SK-N-SH (cell line): ENCODE measurements at regions of chr1 and their contacts with region 1.

Region 1: DNA sequence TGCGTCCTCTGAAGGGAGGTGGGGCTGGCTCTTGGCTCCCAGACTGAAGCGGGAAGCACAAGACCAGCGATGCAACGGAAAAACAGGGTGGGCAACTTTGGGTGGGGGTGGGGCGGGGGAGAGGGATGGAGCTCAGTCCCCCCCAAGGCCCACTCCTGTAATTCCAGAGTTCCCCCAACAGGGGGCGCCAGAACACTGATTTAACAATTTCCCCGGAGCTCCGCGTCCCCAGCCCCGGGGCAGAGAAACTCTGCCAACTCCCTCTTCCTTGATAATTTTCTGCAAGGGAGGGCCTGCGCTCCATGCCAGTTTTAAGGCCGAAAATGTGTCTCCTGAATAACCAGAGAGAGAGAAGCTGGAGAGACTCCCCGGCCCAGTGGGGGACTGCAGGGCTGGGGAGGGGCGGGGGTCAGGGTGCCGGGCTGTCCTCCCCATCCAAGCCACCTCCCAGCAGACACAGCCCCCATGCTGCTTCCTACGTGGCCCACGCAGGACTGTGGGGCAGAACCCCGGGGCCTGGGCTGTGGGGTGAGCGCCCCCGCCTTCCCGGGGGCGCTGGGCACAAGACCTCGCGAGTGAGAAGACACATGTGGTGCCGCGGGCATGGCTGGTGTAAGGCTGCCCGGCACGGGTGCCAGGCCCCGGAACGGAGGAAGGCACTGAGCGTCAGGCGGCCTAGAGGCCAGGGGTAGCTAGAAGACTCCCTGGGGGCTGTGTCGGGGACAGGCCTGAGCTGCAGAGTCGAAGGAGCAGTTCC is 51.4 kb downstream of the KIF21B start:
- DNase-seq: peak; percentile 92
- H3K4me3 ChIP-seq: peak overlapping the region; percentile 9 to 29; a peak in 2 of 4 replicates
- H3K27ac ChIP-seq: no peak overlapping the region
- H3K4me1 ChIP-seq: peaks cover 0 to 3% of the 10 kb centered on the region in 2 experiments; a peak in 1 of 4 replicates
- H3K27me3 ChIP-seq: no peaks in the 10 kb centered on the region
- CTCF ChIP-seq: peak; percentile 79
- EP300 ChIP-seq: no peak
- RAD21 ChIP-seq: peak; percentile 87

Region 2: GRCh38 chr1:200558866-200559459 is 413.2 kb before region 1 on chr1:
- CTCF ChIA-PET with region 1: interaction called, 17 read pairs
- POLR2A ChIA-PET with region 1: no interaction called
- DNase-seq: peak; percentile 47
- H3K4me3 ChIP-seq: no peak overlapping the region
- H3K27ac ChIP-seq: no peak overlapping the region
- H3K4me1 ChIP-seq: no peaks in the 10 kb centered on the region
- H3K27me3 ChIP-seq: no peaks in the 10 kb centered on the region
- CTCF ChIP-seq: peak; percentile 86
- EP300 ChIP-seq: no peak
- RAD21 ChIP-seq: peak; percentile 77

Region 3: DNA sequence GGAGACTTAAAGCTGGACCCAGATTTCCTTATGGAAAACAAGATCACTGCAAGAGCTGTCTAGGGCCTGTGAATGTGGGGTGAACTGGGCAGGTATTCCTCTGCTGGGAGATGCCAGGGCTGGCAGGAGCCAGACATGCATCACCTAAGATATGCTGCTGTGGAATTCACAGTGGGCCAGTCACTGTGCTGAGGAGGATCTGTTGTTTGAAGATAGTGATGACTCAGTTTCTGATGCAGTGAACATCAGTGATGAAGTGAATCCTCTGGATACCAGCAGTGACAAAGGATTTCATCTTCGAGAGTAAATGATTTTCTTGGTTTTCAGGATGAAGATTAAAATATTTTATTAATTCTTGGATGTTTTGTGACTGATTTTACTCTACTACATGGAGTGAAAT is 263.4 kb before region 1 on chr1:
- CTCF ChIA-PET with region 1: no interaction called
- POLR2A ChIA-PET with region 1: no interaction called
- DNase-seq: no peak
- H3K4me3 ChIP-seq: no peak overlapping the region
- H3K27ac ChIP-seq: no peak overlapping the region
- H3K4me1 ChIP-seq: peaks cover 2 to 7% of the 10 kb centered on the region in 2 experiments; a peak in 2 of 4 replicates
- H3K27me3 ChIP-seq: no peaks in the 10 kb centered on the region
- CTCF ChIP-seq: no peak
- EP300 ChIP-seq: no peak
- RAD21 ChIP-seq: no peak

Region 4: GRCh38 chr1:200949626-200950025 is 22.5 kb before region 1 on chr1:
- CTCF ChIA-PET with region 1: interaction called, 44 read pairs
- POLR2A ChIA-PET with region 1: no interaction called
- DNase-seq: no peak
- H3K4me3 ChIP-seq: no peak overlapping the region
- H3K27ac ChIP-seq: no peak overlapping the region
- H3K4me1 ChIP-seq: no peaks in the 10 kb centered on the region
- H3K27me3 ChIP-seq: peaks cover 3% of the 10 kb centered on the region; the same call in 1 of the 2 replicates
- CTCF ChIP-seq: no peak
- EP300 ChIP-seq: no peak
- RAD21 ChIP-seq: no peak

Region 5: DNA sequence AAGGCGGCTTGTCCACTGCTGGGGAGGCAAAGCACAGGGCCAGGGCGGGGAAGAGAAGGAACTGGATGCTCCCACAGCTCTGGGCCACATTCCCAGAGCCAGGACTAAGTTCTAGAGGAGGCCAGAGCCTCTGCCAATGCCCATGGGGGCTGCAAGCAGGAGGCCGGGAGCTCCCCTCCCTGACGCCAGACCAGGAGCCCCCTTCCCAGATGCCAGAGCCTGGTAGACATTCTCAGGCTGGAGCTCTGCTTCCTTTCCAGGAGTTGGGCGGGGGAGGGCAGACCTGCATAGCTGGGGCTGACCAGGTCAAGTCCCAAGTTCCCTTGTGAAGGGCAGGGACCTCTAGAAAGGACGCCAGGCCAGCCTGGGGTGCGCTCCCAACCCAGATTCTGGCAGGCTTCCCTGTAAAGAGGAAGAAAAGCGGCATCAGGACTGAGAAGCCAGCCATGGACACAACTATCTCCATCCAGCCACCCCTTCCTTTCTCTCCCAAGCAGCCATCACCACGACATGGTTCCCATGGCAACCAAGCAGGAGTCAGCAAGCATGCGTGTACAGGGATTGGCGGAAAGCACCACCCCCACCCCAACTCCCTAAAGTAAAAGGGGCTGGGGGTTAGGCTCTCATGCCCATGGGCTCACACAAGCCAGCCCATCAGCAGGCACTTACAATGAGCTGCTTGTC is 38.0 kb after region 1 on chr1:
- CTCF ChIA-PET with region 1: interaction called, 40 read pairs
- POLR2A ChIA-PET with region 1: no interaction called
- DNase-seq: no peak
- H3K4me3 ChIP-seq: no peak overlapping the region
- H3K27ac ChIP-seq: no peak overlapping the region
- H3K4me1 ChIP-seq: peaks cover 0 to 16% of the 10 kb centered on the region in 2 experiments; a peak in 2 of 4 replicates
- H3K27me3 ChIP-seq: no peaks in the 10 kb centered on the region
- CTCF ChIP-seq: no peak
- EP300 ChIP-seq: no peak
- RAD21 ChIP-seq: no peak

Region 6: DNA sequence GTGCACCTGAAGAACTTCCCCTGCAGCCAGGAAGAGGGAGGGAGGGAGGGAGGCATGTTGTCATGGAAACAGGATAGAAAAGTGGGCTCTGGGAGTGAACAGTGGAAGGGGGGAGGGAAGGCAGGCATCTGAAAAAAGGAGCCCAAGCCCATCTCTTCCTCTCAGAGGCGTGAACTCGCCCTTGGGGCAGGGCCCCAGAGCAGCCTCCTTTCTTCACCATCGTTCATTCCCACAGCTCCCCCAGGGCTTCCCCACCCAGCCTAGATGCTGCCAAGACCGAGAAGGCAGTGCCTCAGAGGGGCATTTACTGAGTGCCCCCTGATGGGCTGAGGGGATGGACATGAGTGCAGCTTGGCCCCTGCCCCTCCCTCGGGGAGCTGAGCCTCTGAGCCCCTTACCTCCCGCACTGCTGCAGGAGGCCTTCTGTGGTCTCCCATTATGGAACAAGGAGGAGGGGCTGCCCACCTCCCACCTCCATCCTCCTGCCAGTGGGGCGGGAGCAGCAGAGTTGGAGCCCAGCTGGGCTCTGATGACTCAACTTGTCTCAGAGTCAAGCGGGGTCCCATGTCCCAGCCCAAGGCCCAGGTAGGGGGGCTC is 90.5 kb after region 1 on chr1:
- CTCF ChIA-PET with region 1: interaction called, 13 read pairs
- POLR2A ChIA-PET with region 1: no interaction called
- DNase-seq: no peak
- H3K4me3 ChIP-seq: no peak overlapping the region
- H3K27ac ChIP-seq: no peak overlapping the region
- H3K4me1 ChIP-seq: peaks cover 0 to 7% of the 10 kb centered on the region in 2 experiments; a peak in 1 of 4 replicates
- H3K27me3 ChIP-seq: peaks cover 28% of the 10 kb centered on the region
- CTCF ChIP-seq: no peak
- EP300 ChIP-seq: no peak
- RAD21 ChIP-seq: no peak

Region 7: DNA sequence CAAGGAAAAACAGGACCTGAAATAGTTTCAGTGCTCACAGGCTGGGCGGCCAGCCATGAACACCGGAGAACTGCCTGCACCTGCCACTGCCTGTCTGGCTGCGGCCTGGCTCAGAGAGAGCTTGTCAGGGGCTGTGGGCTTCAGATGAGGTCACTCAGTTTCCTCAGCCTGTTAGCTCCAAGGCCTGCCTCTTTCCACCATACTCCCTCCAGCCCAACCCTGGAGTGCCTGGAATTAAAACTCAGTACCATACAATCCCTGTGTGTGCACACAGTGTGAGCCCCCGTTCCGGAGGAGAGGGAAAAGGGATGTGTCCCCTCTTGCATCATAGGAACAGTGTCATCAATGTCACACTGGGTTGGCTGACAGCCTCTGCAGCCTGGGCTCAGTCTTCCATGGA is 123.9 kb after region 1 on chr1:
- CTCF ChIA-PET with region 1: interaction called, 11 read pairs
- POLR2A ChIA-PET with region 1: no interaction called
- DNase-seq: no peak
- H3K4me3 ChIP-seq: no peak overlapping the region
- H3K27ac ChIP-seq: no peak overlapping the region
- H3K4me1 ChIP-seq: no peaks in the 10 kb centered on the region
- H3K27me3 ChIP-seq: peaks cover 22% of the 10 kb centered on the region
- CTCF ChIP-seq: no peak
- EP300 ChIP-seq: no peak
- RAD21 ChIP-seq: no peak

Region 8: DNA sequence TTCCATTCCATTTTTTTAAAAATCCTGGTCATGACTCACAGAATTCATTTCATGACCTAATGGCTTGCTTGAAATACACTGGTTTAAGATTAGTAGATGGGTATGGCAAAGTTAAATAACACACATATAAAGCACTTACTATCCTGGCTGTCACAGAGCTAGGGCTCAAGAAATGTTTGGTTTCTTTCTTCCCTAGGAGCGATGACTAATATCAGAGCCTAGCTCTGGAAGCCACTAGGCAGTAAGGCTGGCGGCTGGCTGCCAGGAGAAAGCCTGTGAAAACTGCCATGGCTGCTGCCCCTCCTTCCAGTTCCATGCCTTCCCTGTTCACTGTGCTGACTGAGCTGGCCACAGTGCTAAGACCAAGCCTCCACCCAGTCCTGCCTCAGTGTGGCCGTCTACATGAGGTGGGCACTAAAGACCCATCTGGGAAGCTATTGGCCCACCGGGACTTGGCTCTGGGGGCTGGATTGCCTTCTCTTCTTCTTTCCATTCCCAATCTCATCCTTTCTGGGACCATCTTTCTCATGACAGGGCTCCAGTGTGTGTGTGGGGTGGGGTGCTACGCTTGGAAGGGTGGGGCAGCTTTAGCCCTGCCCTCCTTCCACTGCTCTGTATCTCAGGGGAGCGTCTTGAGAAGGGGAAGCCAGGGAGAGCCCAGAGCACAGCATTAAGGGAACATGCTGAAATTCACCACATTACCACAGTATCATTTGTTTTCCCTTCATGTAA is 165.6 kb after region 1 on chr1:
- CTCF ChIA-PET with region 1: interaction called, 13 read pairs
- POLR2A ChIA-PET with region 1: no interaction called
- DNase-seq: no peak
- H3K4me3 ChIP-seq: no peak overlapping the region; a peak in 1 of 4 replicates
- H3K27ac ChIP-seq: peak overlapping the region in 1 of 2 experiments; percentile 76; a peak in 2 of 4 replicates
- H3K4me1 ChIP-seq: peaks cover 19 to 21% of the 10 kb centered on the region in 2 experiments; a peak in 2 of 4 replicates
- H3K27me3 ChIP-seq: no peaks in the 10 kb centered on the region
- CTCF ChIP-seq: no peak
- EP300 ChIP-seq: no peak
- RAD21 ChIP-seq: no peak